ENCODE measurements at regions of chr16 and their contacts with region 1.

Region 1: GRCh38 chr16:1929578-1930337 is 11.5 kb upstream of the HS3ST6 start:
- DNase-seq: peak; percentile 96
- H3K4me3 ChIP-seq: peak overlapping the region; percentile 74 to 76 (median 76)
- H3K27ac ChIP-seq: peak overlapping the region; percentile 81 to 86 (median 83)
- H3K4me1 ChIP-seq: peaks cover 7 to 19% (median 12%) of the 10 kb centered on the region in 4 donors
- H3K27me3 ChIP-seq: peaks cover 0 to 25% (median 0%) of the 10 kb centered on the region in 4 donors
- CTCF ChIP-seq: peak; percentile 100
- EP300 ChIP-seq: no peak
- POLR2A ChIP-seq: no peak

Region 2: DNA sequence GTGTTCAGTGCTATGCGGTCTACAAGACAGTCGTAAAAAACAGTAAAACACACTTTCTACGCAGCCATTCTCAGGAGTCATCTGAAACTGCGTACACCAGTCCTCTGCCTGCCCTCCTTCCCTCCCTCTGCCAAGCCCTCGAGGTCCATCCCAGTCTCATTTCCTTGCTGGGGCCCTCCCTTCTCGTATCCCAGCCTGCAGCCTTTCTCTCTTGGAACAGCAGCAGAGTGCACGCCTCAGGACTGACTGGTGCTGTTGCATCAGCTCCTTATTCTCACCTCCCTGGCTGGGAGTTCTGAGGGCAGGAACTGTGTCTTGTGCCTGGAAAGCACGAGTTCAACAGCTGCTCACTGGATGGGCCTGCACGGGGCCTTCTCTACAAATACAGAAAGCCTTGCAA is 90.2 kb before region 1 on chr16:
- intact Hi-C with region 1: no loop called
- DNase-seq: no peak
- H3K4me3 ChIP-seq: no peak overlapping the region
- H3K27ac ChIP-seq: no peak overlapping the region
- H3K4me1 ChIP-seq: no peaks in the 10 kb centered on the region
- H3K27me3 ChIP-seq: no peaks in the 10 kb centered on the region
- CTCF ChIP-seq: no peak
- EP300 ChIP-seq: no peak
- POLR2A ChIP-seq: no peak

Region 3: GRCh38 chr16:1859650-1860049 is 70.1 kb before region 1 on chr16:
- intact Hi-C with region 1: loop called (anchors 2 kb)
- DNase-seq: no peak
- H3K4me3 ChIP-seq: no peak overlapping the region
- H3K27ac ChIP-seq: no peak overlapping the region
- H3K4me1 ChIP-seq: no peaks in the 10 kb centered on the region
- H3K27me3 ChIP-seq: peaks cover 0 to 55% (median 15%) of the 10 kb centered on the region in 4 donors
- CTCF ChIP-seq: no peak
- EP300 ChIP-seq: no peak
- POLR2A ChIP-seq: no peak

Measured in esophagus muscularis mucosa (tissue), 4 donors.